ENCODE measurements at regions of chr1 and their contacts with region 1.

Region 1: GRCh38 chr1:248807067-248807737 is 18.5 kb downstream of the SH3BP5L start:
- DNase-seq: peak; percentile 64 to 65
- H3K4me3 ChIP-seq: no peak overlapping the region
- H3K4me3 Mint-ChIP-seq: no peak overlapping the region
- H3K27ac Mint-ChIP-seq: no peak overlapping the region
- H3K4me1 ChIP-seq: no peaks in the 10 kb centered on the region
- H3K4me1 Mint-ChIP-seq: peaks cover 7% of the 10 kb centered on the region
- H3K27me3 ChIP-seq: no peaks in the 10 kb centered on the region
- H3K27me3 Mint-ChIP-seq: no peaks in the 10 kb centered on the region
- CTCF ChIP-seq: peak; percentile 72 to 82

Region 2: DNA sequence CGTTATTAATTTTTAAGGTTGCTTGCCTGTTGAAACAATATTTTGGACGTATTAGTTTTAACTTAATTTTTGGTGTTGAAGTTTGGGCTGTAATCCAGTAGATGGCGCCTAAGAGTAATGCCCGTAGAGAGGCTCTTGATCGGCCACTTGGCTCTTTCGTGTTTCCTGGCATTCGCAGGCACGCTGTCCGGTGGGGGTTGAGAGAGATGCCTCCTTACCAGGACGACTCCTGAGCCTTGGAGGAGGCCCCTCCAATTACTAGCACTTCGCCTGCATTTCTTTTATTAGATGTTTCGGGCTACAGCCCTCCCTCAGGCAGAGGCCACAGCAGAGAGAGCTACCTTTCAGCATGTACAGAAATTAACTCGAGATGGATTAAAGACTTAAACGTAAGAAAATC is 564.0 kb before region 1 on chr1:
- CTCF ChIA-PET with region 1: no interaction called
- POLR2A ChIA-PET with region 1: no interaction called
- intact Hi-C with region 1: loop called (anchors 1 kb)
- DNase-seq: peak; percentile 43 to 48
- H3K4me3 ChIP-seq: no peak overlapping the region
- H3K4me3 Mint-ChIP-seq: peak overlapping the region; percentile 35
- H3K27ac Mint-ChIP-seq: no peak overlapping the region
- H3K4me1 ChIP-seq: no peaks in the 10 kb centered on the region
- H3K4me1 Mint-ChIP-seq: no peaks in the 10 kb centered on the region
- H3K27me3 ChIP-seq: no peaks in the 10 kb centered on the region
- H3K27me3 Mint-ChIP-seq: peaks cover 16% of the 10 kb centered on the region
- CTCF ChIP-seq: peak; percentile 68 to 76

Region 3: GRCh38 chr1:248622570-248623001 is 184.6 kb before region 1 on chr1:
- CTCF ChIA-PET with region 1: interaction called, 4 read pairs
- POLR2A ChIA-PET with region 1: no interaction called
- intact Hi-C with region 1: loop called (anchors 1 kb)
- DNase-seq: peak in 1 of 2 experiments; percentile 12
- H3K4me3 ChIP-seq: no peak overlapping the region
- H3K4me3 Mint-ChIP-seq: no peak overlapping the region
- H3K27ac Mint-ChIP-seq: no peak overlapping the region
- H3K4me1 ChIP-seq: no peaks in the 10 kb centered on the region
- H3K4me1 Mint-ChIP-seq: no peaks in the 10 kb centered on the region
- H3K27me3 ChIP-seq: no peaks in the 10 kb centered on the region
- H3K27me3 Mint-ChIP-seq: peaks cover 14% of the 10 kb centered on the region
- CTCF ChIP-seq: peak in 1 of 2 experiments; percentile 51

Region 4: GRCh38 chr1:248696261-248696660 is 110.9 kb before region 1 on chr1:
- CTCF ChIA-PET with region 1: no interaction called
- POLR2A ChIA-PET with region 1: no interaction called
- intact Hi-C with region 1: loop called (anchors 1 kb)
- DNase-seq: peak; percentile 26 to 38
- H3K4me3 ChIP-seq: no peak overlapping the region
- H3K4me3 Mint-ChIP-seq: no peak overlapping the region
- H3K27ac Mint-ChIP-seq: no peak overlapping the region
- H3K4me1 ChIP-seq: no peaks in the 10 kb centered on the region
- H3K4me1 Mint-ChIP-seq: no peaks in the 10 kb centered on the region
- H3K27me3 ChIP-seq: no peaks in the 10 kb centered on the region
- H3K27me3 Mint-ChIP-seq: no peaks in the 10 kb centered on the region
- CTCF ChIP-seq: peak in 1 of 2 experiments; percentile 38

Region 5: GRCh38 chr1:248793592-248793991 is 13.6 kb before region 1 on chr1:
- CTCF ChIA-PET with region 1: no interaction called
- POLR2A ChIA-PET with region 1: no interaction called
- intact Hi-C with region 1: loop called (anchors 1 kb)
- DNase-seq: no peak
- H3K4me3 ChIP-seq: no peak overlapping the region
- H3K4me3 Mint-ChIP-seq: no peak overlapping the region
- H3K27ac Mint-ChIP-seq: no peak overlapping the region
- H3K4me1 ChIP-seq: peaks cover 11% of the 10 kb centered on the region; the same call in 1 of the 2 replicates
- H3K4me1 Mint-ChIP-seq: no peaks in the 10 kb centered on the region
- H3K27me3 ChIP-seq: no peaks in the 10 kb centered on the region
- H3K27me3 Mint-ChIP-seq: no peaks in the 10 kb centered on the region
- CTCF ChIP-seq: no peak

Region 6: DNA sequence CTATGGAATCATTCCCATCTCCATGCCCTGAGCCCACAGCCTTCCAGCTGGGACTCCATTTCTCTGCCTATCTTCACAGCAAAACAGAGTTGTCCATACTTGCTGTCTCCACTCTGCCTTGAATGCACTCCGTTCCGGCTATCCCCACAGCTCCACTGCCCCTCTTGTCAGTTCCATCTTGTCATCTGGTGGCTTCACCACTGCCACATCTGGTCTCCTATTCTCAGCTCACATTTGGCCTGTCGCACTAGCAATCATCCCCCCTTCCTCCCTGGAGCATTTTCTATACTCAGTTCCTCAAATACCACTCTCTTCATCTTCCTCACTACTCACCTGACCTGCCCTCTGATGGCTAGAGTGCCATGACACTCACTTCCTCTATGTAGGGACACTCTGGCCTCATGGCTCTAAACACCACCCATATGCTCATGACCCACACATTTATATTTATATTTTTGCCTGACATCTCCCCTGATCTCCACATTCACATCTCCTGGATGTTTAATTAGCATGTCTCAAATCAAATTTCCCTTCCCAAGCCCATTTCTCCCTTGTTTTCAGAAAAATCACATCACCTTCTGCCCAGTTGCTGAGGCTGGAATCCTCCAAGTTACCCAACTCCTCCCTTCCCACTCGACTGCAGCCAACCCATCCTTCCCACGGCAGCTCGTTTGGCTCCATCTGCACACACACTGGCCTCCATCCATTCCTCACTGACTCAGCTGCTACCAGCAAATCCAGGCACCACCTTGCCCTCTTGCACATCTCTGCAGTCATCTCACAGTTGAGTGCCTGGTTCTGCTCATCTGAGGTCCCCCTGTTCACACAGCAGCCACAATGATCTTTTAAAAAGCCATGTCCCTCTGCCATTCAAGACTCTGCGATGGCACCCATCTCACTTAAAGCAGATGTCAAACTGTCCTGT is 45.5 kb after region 1 on chr1:
- CTCF ChIA-PET with region 1: no interaction called
- POLR2A ChIA-PET with region 1: no interaction called
- intact Hi-C with region 1: no loop called
- DNase-seq: no peak
- H3K4me3 ChIP-seq: no peak overlapping the region
- H3K4me3 Mint-ChIP-seq: no peak overlapping the region
- H3K27ac Mint-ChIP-seq: no peak overlapping the region
- H3K4me1 ChIP-seq: peaks cover 10% of the 10 kb centered on the region
- H3K4me1 Mint-ChIP-seq: no peaks in the 10 kb centered on the region
- H3K27me3 ChIP-seq: no peaks in the 10 kb centered on the region
- H3K27me3 Mint-ChIP-seq: no peaks in the 10 kb centered on the region
- CTCF ChIP-seq: no peak